ENCODE measurements at regions of chr9 and their contacts with region 1.

Region 1: DNA sequence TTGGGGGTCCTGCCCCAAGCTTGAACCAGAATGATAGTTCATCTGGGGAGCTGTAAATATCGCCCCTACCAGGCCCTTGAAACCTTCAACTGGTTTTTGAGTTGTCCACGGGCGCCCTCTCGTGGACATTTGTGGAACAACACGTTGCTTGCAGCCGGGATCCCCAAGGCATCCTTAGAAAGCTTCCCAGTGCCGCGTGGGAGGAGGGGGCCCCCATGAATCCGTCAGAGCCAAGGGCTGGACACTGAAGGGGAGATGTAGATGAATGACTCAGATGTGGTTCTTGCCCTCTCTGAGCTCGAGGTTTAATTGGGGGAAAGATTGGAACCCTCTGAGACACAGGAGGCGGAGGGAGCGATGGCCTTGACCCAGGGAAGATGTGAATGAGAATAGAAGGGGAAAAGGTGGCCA is 31.8 kb upstream of the ORM1 start:
- DNase-seq: peak; percentile 72
- H3K4me3 ChIP-seq: no peak overlapping the region
- H3K27ac ChIP-seq: no peak overlapping the region
- H3K4me1 ChIP-seq: no peaks in the 10 kb centered on the region
- H3K27me3 ChIP-seq: no peaks in the 10 kb centered on the region
- CTCF ChIP-seq: peak; percentile 77 to 79
- POLR2A ChIP-seq: no peak

Region 2: DNA sequence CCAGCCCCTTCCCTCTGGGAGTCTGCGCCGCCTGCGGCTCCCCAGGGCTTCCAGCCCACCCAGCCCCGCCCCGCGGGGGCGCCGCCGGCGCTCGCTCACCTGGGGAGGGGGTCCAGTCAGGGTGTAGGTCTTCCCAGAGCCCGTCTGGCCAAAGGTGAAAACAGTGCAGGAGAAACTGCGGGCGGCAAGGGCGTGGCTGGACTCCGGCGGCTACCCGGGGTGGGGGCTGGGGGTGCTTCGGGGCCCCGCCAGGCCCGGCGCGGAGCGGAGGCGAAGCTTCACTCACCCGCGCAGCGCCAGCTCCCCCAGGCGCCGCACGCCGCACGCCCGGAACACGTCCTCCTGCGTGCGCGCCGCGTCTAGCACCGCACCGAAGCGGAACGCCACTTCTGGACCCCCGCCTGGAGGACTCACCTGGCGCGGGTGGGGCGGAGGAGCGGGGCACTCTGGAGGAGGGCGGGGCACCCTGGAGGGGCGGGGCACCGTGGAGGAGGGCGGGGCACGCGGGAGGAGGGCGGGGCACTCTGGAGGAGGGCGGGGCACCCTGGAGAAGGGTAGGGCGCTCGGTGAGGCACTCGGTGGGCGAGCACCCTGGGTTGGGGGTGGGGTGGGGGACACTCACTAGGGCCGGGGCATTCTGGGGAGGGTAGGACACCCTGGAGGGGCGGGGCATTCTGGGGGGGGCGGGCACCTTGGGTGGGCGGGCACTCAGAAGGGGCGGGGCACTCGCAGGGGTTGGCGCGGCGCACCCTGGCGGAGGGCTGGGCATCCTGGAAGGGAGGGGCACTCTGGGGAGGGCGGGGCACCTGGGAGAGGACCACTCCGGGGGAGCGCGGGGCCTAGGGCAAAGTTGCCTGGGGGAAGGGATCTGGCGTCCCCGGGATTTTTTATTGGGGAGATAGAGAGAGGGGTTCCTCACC is 192.8 kb before region 1 on chr9:
- CTCF ChIA-PET with region 1: interaction called, 28 read pairs
- POLR2A ChIA-PET with region 1: no interaction called
- dilution Hi-C with region 1: loop called (anchors 25 kb)
- intact Hi-C with region 1: no loop called
- DNase-seq: no peak
- H3K4me3 ChIP-seq: peak overlapping the region in 2 of 3 experiments; percentile 10 to 31
- H3K27ac ChIP-seq: no peak overlapping the region
- H3K4me1 ChIP-seq: peaks cover 10% of the 10 kb centered on the region
- H3K27me3 ChIP-seq: no peaks in the 10 kb centered on the region
- CTCF ChIP-seq: no peak
- POLR2A ChIP-seq: no peak

Region 3: DNA sequence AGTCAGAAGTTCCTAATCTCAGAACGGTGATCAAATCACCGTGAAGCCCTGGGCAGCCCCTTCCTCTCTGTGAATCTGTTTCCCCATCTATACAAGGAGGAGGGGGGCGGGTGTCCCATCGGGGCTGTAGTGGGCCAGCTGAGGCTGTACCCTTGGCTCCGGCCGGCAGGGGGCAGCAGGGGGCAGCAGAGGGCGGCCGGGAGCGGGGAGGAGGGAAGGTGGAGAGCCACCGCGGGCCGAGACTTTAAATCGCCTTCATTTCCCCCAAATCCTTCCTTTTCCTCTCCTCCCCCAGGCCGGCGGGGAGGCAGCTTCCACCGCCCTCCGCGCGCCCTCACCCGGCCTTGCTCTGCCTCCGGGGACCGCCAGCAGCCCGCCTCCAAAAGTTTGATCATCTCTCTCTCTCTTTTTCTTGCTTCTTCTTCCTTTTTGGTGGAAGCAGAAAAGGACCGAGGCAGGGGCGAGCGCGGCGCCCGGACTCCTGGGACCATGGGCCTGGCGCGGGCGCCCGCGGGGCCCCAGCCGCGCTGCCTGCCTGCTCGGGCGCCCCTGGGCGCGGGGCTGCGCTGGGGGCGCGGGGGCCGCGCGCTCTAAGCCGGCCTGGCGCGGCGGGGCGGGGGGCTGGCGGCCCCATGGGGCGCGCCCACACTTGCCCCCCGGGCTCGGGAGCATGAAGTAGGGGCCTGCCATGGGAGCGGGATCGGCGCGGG is 135.7 kb before region 1 on chr9 and contains the start of gene COL27A1:
- CTCF ChIA-PET with region 1: interaction called, 127 read pairs
- POLR2A ChIA-PET with region 1: no interaction called
- dilution Hi-C with region 1: no loop called
- intact Hi-C with region 1: loop called (anchors 1 kb)
- DNase-seq: peak; percentile 81
- H3K4me3 ChIP-seq: peak within 1 kb of the TSS; percentile 41 to 79 (median 68)
- H3K27ac ChIP-seq: peak within 1 kb of the TSS; percentile 36
- H3K4me1 ChIP-seq: peaks cover 25% of the 10 kb centered on the region
- H3K27me3 ChIP-seq: peaks cover 16 to 18% of the 10 kb centered on the region in 2 experiments
- CTCF ChIP-seq: peak; percentile 82 to 97
- POLR2A ChIP-seq: no peak
- total RNA-seq, gene COL27A1: 48.6 and 49.1 TPM in 2 replicates

Region 4: DNA sequence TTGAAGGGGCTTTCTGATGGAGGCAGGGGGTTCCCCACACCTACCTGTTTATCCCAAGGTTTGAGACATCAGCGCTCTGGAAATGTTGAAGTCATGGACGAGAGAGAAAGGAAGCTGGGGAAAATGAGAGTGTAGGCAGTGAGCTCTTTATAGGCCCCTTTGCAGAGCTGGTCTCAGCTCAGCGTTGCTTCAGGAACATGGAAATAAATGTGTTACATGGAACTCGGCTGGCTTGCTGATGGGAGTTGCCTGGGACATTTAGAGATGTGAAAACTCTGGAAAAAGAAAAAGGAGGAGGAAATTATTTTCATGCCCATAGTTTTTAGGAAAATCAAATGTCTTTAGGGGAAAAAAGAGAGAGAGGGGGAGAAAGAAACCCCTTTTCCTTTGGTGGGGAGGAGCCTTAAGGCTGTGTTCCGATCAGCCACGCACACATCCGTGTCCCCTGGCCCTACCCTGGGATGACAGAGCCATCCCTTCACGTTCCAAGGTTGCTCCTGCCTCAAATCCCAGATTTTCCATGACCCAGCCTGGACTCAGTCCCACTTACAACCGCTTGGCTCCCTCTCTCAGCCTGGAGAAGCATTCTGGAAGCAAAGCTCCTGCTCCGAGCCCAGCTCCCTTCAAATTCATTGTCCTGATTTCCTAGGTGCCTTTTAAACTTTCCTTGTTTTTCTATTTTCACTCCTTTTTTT is 57.4 kb before region 1 on chr9:
- CTCF ChIA-PET with region 1: interaction called, 37 read pairs
- POLR2A ChIA-PET with region 1: no interaction called
- dilution Hi-C with region 1: no loop called
- intact Hi-C with region 1: loop called (anchors 5 kb)
- DNase-seq: no peak
- H3K4me3 ChIP-seq: no peak overlapping the region
- H3K27ac ChIP-seq: no peak overlapping the region
- H3K4me1 ChIP-seq: peaks cover 3% of the 10 kb centered on the region
- H3K27me3 ChIP-seq: no peaks in the 10 kb centered on the region
- CTCF ChIP-seq: no peak
- POLR2A ChIP-seq: no peak

Region 5: GRCh38 chr9:114246558-114246957 is 44.5 kb before region 1 on chr9:
- CTCF ChIA-PET with region 1: interaction called, 15 read pairs
- POLR2A ChIA-PET with region 1: no interaction called
- dilution Hi-C with region 1: no loop called
- intact Hi-C with region 1: no loop called
- DNase-seq: no peak
- H3K4me3 ChIP-seq: no peak overlapping the region
- H3K27ac ChIP-seq: no peak overlapping the region
- H3K4me1 ChIP-seq: no peaks in the 10 kb centered on the region
- H3K27me3 ChIP-seq: no peaks in the 10 kb centered on the region
- CTCF ChIP-seq: no peak
- POLR2A ChIP-seq: no peak

Region 6: DNA sequence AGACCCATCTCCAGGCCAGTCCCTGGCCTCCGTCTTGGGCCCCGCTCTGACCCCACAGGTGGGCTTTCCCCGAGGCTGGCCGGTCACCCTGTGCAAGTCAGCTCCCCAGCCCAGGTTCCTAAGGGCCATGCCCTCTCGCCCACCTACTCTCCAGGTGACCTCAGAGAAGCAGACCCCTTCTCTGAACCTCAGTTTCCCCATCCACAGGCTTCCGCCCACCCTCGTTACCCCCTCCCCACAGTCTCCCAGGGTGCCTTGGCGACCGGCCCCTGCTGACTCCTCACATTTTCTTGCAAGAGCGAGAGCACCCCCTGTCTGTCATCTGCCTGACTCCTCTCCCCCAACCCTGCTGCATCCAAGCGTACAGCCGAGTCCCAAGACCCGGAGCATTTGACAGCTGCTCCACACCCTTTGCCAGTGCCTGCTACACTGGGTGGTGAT is 19.4 kb before region 1 on chr9:
- CTCF ChIA-PET with region 1: interaction called, 30 read pairs
- POLR2A ChIA-PET with region 1: no interaction called
- dilution Hi-C with region 1: no loop called
- intact Hi-C with region 1: no loop called
- DNase-seq: peak; percentile 58
- H3K4me3 ChIP-seq: no peak overlapping the region
- H3K27ac ChIP-seq: no peak overlapping the region
- H3K4me1 ChIP-seq: no peaks in the 10 kb centered on the region
- H3K27me3 ChIP-seq: no peaks in the 10 kb centered on the region
- CTCF ChIP-seq: peak; percentile 23 to 75
- POLR2A ChIP-seq: no peak

Region 7: DNA sequence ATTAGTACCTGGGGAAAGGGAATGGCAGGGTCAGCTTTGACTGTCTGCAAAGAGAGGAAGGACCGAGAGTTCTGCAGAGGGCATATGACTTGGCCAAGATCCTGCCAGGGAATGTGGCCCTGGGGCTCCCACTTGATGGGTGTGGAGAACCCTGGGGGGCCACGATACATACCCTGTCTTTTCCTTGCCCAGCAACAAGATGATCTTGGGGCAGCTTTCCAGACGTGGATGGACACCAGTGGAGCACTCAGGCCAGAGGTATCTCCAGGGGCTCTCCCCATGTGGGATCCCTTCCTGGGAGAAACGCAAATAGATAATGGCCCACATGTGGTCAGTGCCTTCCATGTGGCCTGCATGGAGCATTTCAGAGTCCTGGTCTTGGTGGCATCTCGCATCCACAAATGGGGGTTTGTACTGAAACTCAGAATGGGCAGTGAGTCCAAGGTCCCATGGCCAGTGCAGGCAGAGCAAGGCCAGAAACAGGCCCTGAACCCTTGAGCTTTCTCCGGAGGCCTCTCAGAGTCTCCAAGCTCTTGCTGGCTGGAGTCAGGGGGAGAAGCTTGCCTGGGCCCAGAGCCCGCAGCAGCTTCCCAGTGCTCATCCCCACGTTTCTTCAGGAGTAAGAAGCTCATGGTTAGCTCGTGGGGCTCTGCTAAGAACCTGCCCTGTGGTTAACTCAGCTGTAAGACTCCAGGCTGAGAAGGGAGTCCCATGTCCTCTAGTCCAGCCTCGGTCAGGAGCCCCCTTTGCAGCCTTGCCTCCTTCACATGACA is 13.5 kb after region 1 on chr9:
- CTCF ChIA-PET with region 1: interaction called, 14 read pairs
- POLR2A ChIA-PET with region 1: no interaction called
- dilution Hi-C with region 1: no loop called
- intact Hi-C with region 1: no loop called
- DNase-seq: no peak
- H3K4me3 ChIP-seq: no peak overlapping the region
- H3K27ac ChIP-seq: no peak overlapping the region
- H3K4me1 ChIP-seq: no peaks in the 10 kb centered on the region
- H3K27me3 ChIP-seq: no peaks in the 10 kb centered on the region
- CTCF ChIP-seq: no peak
- POLR2A ChIP-seq: no peak

Measured in endothelial cell of umbilical vein (primary cell).